Sigmoid colon (tissue), 7 donors: ENCODE measurements at regions of chr4 and their contacts with region 1.

Region 1: GRCh38 chr4:103099691-103100392 is at the start of gene BDH2:
- DNase-seq: peak; percentile 81
- H3K4me3 ChIP-seq: peak within 1 kb of the TSS; percentile 21 to 51 (median 44)
- H3K27ac ChIP-seq: peak within 1 kb of the TSS; percentile 55 to 71 (median 68)
- H3K4me1 ChIP-seq: peaks cover 0 to 36% (median 18%) of the 10 kb centered on the region in 4 donors
- H3K27me3 ChIP-seq: no peaks in the 10 kb centered on the region
- CTCF ChIP-seq: peak; percentile 58 to 73 (median 66)
- EP300 ChIP-seq: no peak
- POLR2A ChIP-seq: peak in 1 of 2 donors; percentile 41
- total RNA-seq, gene BDH2: 47.6 to 54.0 (median 50.2) TPM

Region 2: GRCh38 chr4:102449751-102450352 is 650.0 kb before region 1 on chr4:
- intact Hi-C with region 1: loop called (anchors 5 kb)
- DNase-seq: no peak
- H3K4me3 ChIP-seq: no peak overlapping the region
- H3K27ac ChIP-seq: no peak overlapping the region
- H3K4me1 ChIP-seq: no peaks in the 10 kb centered on the region
- H3K27me3 ChIP-seq: no peaks in the 10 kb centered on the region
- CTCF ChIP-seq: peak; percentile 30 to 59 (median 39)
- EP300 ChIP-seq: no peak
- POLR2A ChIP-seq: no peak

Region 3: DNA sequence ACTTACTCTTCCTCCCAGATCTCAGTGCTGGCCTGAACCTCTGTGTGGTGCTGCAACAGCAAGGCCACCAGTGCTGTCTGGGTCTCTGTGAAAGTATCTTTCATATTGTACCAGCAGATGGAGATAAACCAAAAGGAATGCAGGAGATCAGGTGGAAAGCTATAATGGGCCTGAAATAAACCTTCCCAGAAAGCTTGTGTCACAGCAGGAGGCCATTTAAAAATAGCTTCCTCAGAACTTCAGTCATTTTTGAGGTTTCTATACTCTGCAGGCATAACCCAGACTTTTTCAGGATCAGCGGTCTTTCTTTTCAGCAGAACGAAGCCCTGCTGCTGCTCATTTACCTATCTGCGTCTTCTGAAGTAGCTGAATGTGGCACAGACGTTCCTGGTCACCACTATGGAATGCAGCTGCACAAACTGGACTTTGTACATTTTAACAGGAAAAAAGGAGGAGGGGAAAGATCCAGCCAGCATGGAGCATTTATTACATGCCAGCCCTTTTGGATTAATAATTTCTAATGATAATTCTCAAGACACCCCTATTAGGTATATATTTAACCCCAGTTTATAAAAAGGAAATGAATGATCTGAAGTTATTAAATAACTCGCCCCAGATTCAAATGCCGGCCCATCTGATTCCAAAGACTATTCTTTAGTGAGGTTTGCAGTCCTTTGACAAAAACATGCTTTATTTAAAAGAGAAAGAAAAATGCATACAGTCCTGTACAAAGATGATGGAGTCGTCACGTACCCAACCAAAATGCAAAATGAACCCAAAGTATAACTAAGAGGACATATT is 478.9 kb before region 1 on chr4:
- intact Hi-C with region 1: loop called (anchors 5 kb)
- DNase-seq: no peak
- H3K4me3 ChIP-seq: peak overlapping the region in 1 of 4 donors; percentile 7
- H3K27ac ChIP-seq: peak overlapping the region in 1 of 4 donors; percentile 42
- H3K4me1 ChIP-seq: peaks cover 0 to 9% (median 6%) of the 10 kb centered on the region in 4 donors
- H3K27me3 ChIP-seq: no peaks in the 10 kb centered on the region
- CTCF ChIP-seq: peak; percentile 34 to 73 (median 50)
- EP300 ChIP-seq: no peak
- POLR2A ChIP-seq: no peak

Region 4: GRCh38 chr4:102760645-102761295 is 339.1 kb before region 1 on chr4 and contains the start of gene MANBA:
- intact Hi-C with region 1: loop called (anchors 10 kb)
- DNase-seq: peak; percentile 90
- H3K4me3 ChIP-seq: peak within 1 kb of the TSS; percentile 52 to 99 (median 84)
- H3K27ac ChIP-seq: peak within 1 kb of the TSS; percentile 78 to 93 (median 82)
- H3K4me1 ChIP-seq: peaks cover 0 to 17% (median 10%) of the 10 kb centered on the region in 4 donors
- H3K27me3 ChIP-seq: no peaks in the 10 kb centered on the region
- CTCF ChIP-seq: no peak
- EP300 ChIP-seq: no peak
- POLR2A ChIP-seq: peak in 1 of 2 donors; percentile 32
- total RNA-seq, gene MANBA: 25.3 to 47.4 (median 44.8) TPM

Region 5: DNA sequence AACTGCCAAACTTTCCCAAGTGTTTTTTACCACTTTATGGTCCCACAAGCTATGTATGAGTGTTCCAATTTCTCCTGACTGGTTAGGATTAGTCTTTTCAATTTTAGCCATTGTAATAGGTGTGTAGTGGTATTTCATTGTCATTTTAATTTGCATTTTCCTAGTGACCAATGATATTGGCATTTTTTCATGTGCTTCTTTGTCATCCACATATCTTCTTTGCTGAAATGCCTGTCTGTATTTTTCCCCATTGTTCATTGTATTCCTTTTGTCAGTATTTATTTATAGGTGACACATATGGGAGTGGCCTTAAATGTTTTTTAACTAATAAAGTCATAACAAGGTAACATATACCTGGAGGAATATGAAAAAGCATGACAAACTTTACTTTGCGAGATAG is 263.2 kb before region 1 on chr4:
- intact Hi-C with region 1: no loop called
- DNase-seq: no peak
- H3K4me3 ChIP-seq: no peak overlapping the region
- H3K27ac ChIP-seq: no peak overlapping the region
- H3K4me1 ChIP-seq: no peaks in the 10 kb centered on the region
- H3K27me3 ChIP-seq: no peaks in the 10 kb centered on the region
- CTCF ChIP-seq: no peak
- EP300 ChIP-seq: no peak
- POLR2A ChIP-seq: no peak

Region 6: GRCh38 chr4:103019308-103020124 is 80.3 kb before region 1 on chr4 and contains the start of gene SLC9B1:
- intact Hi-C with region 1: loop called (anchors 5 kb)
- DNase-seq: peak; percentile 99
- H3K4me3 ChIP-seq: peak within 1 kb of the TSS; percentile 30 to 52 (median 48)
- H3K27ac ChIP-seq: peak within 1 kb of the TSS; percentile 84 to 89 (median 89)
- H3K4me1 ChIP-seq: peaks cover 0 to 13% (median 9%) of the 10 kb centered on the region in 4 donors
- H3K27me3 ChIP-seq: no peaks in the 10 kb centered on the region
- CTCF ChIP-seq: no peak
- EP300 ChIP-seq: peak in 3 of 4 donors; percentile 37 to 94 (median 77)
- POLR2A ChIP-seq: peak; percentile 78 to 82
- total RNA-seq, gene SLC9B1: 0.82 to 3.9 (median 1.2) TPM in 3 of 4 donors, not detected in the other

Region 7: DNA sequence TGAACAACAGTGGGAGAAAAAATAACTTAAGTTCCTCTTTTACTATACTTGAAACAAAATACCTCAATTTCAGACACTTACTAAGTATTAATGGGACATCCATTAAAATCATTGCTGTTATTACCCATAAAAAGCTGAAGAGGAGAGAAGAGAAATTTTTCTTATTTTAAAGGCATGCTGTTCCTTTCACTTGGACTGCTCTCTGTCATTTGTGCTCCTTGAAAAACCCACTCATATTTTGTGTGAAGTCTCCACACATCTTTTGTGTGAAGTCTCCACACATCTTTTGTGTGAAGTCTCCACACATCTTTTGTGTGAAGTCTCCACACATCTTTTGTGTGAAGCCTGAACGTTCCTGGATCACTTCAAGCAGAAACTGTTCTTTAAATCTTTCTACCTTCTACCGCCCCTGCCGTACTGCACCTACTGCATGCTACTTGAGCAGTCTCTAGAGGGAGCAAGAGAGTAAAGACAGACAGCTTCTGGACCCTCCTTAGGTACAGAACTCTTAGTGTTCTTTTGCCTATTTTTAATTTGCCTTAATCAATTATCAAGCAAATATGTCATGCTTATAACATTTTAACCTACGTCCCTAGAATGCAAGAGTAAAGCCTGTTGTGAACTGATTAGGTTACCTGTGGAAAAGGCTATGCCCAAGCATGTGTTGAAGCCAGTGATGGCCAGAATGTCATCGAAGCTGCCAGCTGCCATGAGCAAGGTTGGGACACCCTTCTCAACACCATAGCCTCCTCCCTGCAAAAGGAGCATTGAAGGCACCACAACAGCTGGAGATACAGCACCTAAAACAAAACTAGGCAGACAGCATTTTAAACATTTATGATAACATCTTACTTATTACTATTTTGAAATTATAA is 53.2 kb before region 1 on chr4:
- intact Hi-C with region 1: loop called (anchors 2 kb)
- DNase-seq: no peak
- H3K4me3 ChIP-seq: no peak overlapping the region
- H3K27ac ChIP-seq: no peak overlapping the region
- H3K4me1 ChIP-seq: no peaks in the 10 kb centered on the region
- H3K27me3 ChIP-seq: no peaks in the 10 kb centered on the region
- CTCF ChIP-seq: peak in 3 of 4 experiments; percentile 41 to 67 (median 45)
- EP300 ChIP-seq: no peak
- POLR2A ChIP-seq: no peak

Region 8: DNA sequence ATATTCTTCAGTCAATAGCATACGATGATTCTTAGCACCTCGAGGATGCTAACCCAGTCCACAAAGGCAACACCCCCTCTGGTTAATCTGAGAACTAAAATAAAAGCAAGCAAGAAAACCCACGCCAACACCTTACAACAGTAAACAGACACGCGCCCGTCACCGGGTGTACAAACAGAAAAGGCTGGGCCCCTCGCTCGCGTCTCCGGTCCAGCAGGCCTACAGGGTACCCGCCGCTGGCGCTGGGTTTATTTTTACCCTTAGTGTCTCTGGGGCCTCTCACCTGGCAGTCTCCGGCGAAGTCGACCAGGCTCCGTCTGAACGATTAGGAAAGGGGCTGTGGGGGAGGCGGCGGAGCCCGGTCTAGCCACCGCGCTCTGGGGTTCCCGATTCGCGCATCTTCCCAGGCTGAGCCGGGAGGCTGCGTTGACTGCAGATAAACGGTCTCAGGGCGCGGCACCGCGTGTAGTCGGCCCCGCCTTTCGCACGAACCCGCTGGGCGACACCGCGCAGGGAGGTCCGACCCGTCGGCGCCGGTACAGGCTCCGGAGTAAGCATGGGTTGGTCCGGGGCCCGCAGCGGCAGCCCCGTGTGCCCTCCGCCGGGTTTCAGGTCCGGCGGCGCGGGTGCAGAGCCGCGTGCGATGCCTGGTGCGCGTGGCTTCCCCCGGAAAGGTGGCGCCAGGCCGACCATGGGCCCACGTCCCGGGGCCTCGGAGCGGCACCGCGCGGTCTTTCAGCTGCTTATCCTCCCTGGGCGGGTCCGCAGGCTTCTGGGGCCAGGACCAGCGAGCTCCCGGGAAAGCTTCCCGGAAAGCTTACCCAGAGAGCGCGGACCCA is 23.7 kb before region 1 on chr4:
- intact Hi-C with region 1: loop called (anchors 2 kb)
- DNase-seq: peak; percentile 86
- H3K4me3 ChIP-seq: peak overlapping the region; percentile 60 to 84 (median 64)
- H3K27ac ChIP-seq: peak overlapping the region; percentile 84 to 95 (median 88)
- H3K4me1 ChIP-seq: peaks cover 0 to 16% (median 8%) of the 10 kb centered on the region in 4 donors
- H3K27me3 ChIP-seq: no peaks in the 10 kb centered on the region
- CTCF ChIP-seq: no peak
- EP300 ChIP-seq: no peak
- POLR2A ChIP-seq: no peak

Region 9: DNA sequence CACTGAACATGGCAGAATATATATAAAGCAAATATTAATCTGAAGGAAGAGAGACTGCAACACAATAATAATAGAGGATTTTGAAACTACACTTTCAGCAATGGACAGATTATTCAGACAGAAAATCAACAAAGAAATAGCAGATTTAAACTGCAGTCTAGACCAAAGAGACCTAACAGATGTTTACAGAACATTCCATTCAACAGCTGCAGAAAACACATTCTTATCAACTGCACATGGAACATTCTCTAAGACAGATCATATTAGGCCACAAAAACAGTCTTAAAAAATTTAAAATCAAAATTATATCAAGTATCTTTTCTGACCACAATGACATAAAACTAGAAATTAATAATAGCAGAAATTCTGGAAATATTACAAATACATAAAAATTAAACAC is 71.2 kb after region 1 on chr4:
- intact Hi-C with region 1: no loop called
- DNase-seq: no peak
- H3K4me3 ChIP-seq: no peak overlapping the region
- H3K27ac ChIP-seq: no peak overlapping the region
- H3K4me1 ChIP-seq: no peaks in the 10 kb centered on the region
- H3K27me3 ChIP-seq: no peaks in the 10 kb centered on the region
- CTCF ChIP-seq: no peak
- EP300 ChIP-seq: no peak
- POLR2A ChIP-seq: no peak